Dorsolateral prefrontal cortex (tissue), 120 donors: ENCODE measurements at regions of chr17 and their contacts with region 1.

Region 1: DNA sequence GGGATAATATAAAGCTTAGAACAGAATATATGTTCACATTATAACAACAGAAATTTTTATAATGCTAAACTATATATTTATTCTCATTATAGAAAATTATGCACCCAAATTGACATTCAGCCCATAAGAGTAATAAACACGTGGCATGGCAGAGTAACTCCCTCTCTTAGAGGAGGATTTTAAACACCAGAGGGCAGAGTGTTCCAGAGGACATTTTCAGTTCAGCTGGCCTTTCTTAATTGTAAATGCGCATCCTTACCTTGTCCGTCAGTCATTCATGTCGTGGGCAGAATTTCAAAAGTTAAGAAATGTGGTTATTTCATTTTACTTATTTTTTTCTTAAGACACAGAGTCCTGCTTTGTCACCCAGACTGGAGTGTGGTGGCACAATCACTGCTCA is 147.1 kb downstream of the TANC2 start:
- DNase-seq: no peak
- H3K4me3 ChIP-seq: no peak overlapping the region
- H3K27ac ChIP-seq: no peak overlapping the region
- H3K27me3 ChIP-seq: no peaks in the 10 kb centered on the region
- CTCF ChIP-seq: peak in 54 of 56 donors; percentile 32 to 83 (median 60)

Region 2: GRCh38 chr17:62703775-62704378 is 409.3 kb before region 1 on chr17:
- intact Hi-C with region 1: loop called in 1 of 2 experiments (anchors 5 kb)
- DNase-seq: peak in 9 of 10 donors; percentile 61 to 91 (median 73)
- H3K4me3 ChIP-seq: peak overlapping the region; percentile 48 to 94 (median 78)
- H3K27ac ChIP-seq: peak overlapping the region in 58 of 59 donors; percentile 52 to 95 (median 91)
- H3K27me3 ChIP-seq: no peaks in the 10 kb centered on the region
- CTCF ChIP-seq: peak; percentile 54 to 97 (median 84)

Region 3: GRCh38 chr17:62899361-62899760 is 213.8 kb before region 1 on chr17:
- intact Hi-C with region 1: no loop called
- DNase-seq: no peak
- H3K4me3 ChIP-seq: no peak overlapping the region
- H3K27ac ChIP-seq: no peak overlapping the region
- H3K27me3 ChIP-seq: no peaks in the 10 kb centered on the region
- CTCF ChIP-seq: no peak

Region 4: GRCh38 chr17:63071797-63072196 is 41.4 kb before region 1 on chr17:
- intact Hi-C with region 1: loop called in 1 of 2 experiments (anchors 2 kb)
- DNase-seq: no peak
- H3K4me3 ChIP-seq: no peak overlapping the region
- H3K27ac ChIP-seq: no peak overlapping the region
- H3K27me3 ChIP-seq: no peaks in the 10 kb centered on the region
- CTCF ChIP-seq: no peak